Right ventricle myocardium inferior (tissue), 1 donor: ENCODE measurements at regions of chr1 and their contacts with region 1.

Region 1: GRCh38 chr1:114581335-114582287 is at the start of gene BCAS2:
- DNase-seq: peak; percentile 97
- ATAC-seq: peak; percentile 99
- total RNA-seq, gene BCAS2: 28.4 TPM

Region 2: DNA sequence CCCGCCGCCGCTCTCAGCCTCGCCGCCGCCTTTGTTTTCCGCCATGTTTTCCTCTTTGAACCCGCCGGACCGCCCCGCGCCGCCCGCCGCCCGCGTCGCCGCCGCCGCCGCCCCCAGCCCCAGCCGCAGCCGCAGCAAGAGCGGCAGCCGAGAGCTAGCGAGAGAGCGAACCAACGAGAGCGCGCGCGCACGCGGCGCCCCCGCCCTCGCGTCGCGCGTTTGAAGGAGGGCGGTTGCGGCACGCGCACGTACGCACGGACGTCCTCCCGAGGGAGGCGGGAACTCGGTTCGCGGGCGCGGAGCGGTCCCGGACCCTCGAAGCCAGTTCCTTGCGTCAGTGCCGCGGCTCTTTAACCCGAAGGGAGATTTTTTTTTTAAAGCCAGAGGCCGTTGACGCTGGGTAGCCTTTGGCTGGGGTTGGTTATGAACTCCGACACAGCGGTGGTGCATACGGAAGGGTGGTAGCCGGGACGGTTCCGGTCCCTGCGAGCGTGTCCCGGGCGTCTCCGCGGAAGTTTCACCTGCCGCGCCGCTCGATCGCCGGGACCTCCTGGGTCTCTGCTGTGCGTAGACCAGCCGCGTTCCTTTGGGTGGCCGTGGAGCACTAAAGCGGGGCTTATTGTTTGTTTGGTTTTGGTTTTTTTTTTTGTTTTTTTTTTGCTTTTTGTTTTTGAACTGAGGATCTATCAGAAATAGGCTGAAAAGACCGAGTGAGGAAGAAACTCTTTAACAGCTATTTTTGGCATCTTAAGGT is 70.4 kb before region 1 on chr1 and contains the start of gene TRIM33:
- intact Hi-C with region 1: loop called (anchors 5 kb)
- DNase-seq: peak; percentile 96
- ATAC-seq: peak; percentile 97
- total RNA-seq, gene TRIM33: 14.5 TPM

Region 3: DNA sequence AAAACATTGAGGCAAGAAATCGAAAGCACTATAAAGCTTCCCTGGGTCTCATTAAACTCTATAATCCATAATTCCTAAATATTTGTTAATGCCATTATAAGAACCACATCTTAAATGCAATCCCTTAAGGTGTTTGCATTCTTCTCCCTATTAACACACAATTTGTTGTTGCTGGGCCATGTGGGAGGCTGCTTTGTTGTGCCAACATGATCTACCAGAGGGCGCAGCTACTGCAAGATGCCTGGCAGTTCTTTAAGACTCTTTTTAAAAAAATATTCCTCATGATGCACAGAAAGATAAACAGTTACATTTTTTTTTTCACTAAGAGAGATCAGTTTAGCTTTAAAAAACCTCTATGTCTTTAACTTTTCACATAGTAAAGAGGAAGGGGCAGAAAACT is 38.8 kb after region 1 on chr1:
- intact Hi-C with region 1: no loop called
- DNase-seq: no peak
- ATAC-seq: no peak

Region 4: GRCh38 chr1:114641377-114641776 is 59.8 kb after region 1 on chr1:
- intact Hi-C with region 1: no loop called
- DNase-seq: no peak
- ATAC-seq: no peak

Region 5: DNA sequence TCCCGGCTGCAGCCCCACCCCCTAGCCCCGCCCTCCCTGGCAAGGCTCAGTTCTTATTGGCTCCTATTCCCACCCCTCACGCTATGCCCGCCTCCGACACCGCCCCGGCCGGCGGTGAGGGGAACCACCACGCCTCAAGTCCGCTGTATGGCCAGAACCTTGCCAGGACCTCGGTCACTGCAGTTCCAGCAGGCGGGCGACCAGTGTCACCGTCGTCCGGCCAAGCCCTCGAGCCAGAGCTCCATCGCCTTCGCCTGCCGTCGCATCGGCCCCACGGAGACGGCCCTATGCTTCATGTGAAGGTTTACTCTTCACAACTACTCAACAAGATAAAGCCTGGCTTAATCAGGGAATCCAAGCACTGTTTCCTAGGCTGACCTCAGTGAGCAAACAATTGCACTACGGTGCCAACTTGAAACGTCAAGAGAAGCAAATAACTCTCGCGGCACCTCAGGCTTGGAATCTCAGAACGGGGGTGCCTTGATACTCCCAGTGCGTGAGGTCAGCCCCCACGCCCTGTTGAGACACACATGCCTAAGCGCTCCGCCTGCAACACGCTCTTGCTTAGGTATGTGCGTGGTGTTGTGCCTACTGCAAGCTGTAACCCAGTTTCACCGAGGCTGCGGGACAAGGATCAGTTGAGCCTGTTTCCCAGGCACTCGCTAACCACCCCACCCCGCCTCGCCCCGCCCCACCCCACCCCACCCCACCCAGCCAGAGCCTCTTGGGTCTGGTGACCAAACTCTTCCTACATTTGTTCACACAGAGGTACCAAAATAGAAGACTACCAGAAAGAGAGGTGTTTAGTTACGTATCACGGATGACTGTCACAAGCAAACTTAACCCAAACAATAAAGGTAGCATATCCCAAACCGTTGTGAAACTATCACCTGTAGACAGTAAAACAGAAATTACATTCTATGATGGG is 88.7 kb after region 1 on chr1:
- intact Hi-C with region 1: loop called (anchors 5 kb)
- DNase-seq: peak; percentile 95
- ATAC-seq: peak; percentile 100

Region 6: GRCh38 chr1:114716304-114717170 is 134.9 kb after region 1 on chr1 and contains the start of gene NRAS:
- intact Hi-C with region 1: loop called (anchors 2 kb)
- DNase-seq: peak; percentile 97
- ATAC-seq: peak; percentile 99
- total RNA-seq, gene NRAS: 7.2 TPM

Region 7: GRCh38 chr1:115275212-115275611 is 693.6 kb after region 1 on chr1:
- intact Hi-C with region 1: no loop called
- DNase-seq: no peak
- ATAC-seq: no peak